ENCODE measurements at regions of chr20 and their contacts with region 1.

Region 1: GRCh38 chr20:63980806-63981728 is at the start of gene PRPF6:
- DNase-seq: peak; percentile 93
- H3K4me3 Mint-ChIP-seq: peak within 1 kb of the TSS; percentile 96
- H3K27ac Mint-ChIP-seq: peak within 1 kb of the TSS; percentile 99
- H3K4me1 Mint-ChIP-seq: peaks cover 55% of the 10 kb centered on the region
- H3K27me3 Mint-ChIP-seq: no peaks in the 10 kb centered on the region
- total RNA-seq, gene PRPF6: 68.9 and 70.3 TPM in 2 replicates

Region 2: GRCh38 chr20:63537525-63538203 is 443.4 kb before region 1 on chr20:
- intact Hi-C with region 1: loop called (anchors 2 kb)
- DNase-seq: peak; percentile 94
- H3K4me3 Mint-ChIP-seq: peak overlapping the region; percentile 69
- H3K27ac Mint-ChIP-seq: peak overlapping the region; percentile 87
- H3K4me1 Mint-ChIP-seq: peaks cover 5% of the 10 kb centered on the region
- H3K27me3 Mint-ChIP-seq: no peaks in the 10 kb centered on the region

Region 3: DNA sequence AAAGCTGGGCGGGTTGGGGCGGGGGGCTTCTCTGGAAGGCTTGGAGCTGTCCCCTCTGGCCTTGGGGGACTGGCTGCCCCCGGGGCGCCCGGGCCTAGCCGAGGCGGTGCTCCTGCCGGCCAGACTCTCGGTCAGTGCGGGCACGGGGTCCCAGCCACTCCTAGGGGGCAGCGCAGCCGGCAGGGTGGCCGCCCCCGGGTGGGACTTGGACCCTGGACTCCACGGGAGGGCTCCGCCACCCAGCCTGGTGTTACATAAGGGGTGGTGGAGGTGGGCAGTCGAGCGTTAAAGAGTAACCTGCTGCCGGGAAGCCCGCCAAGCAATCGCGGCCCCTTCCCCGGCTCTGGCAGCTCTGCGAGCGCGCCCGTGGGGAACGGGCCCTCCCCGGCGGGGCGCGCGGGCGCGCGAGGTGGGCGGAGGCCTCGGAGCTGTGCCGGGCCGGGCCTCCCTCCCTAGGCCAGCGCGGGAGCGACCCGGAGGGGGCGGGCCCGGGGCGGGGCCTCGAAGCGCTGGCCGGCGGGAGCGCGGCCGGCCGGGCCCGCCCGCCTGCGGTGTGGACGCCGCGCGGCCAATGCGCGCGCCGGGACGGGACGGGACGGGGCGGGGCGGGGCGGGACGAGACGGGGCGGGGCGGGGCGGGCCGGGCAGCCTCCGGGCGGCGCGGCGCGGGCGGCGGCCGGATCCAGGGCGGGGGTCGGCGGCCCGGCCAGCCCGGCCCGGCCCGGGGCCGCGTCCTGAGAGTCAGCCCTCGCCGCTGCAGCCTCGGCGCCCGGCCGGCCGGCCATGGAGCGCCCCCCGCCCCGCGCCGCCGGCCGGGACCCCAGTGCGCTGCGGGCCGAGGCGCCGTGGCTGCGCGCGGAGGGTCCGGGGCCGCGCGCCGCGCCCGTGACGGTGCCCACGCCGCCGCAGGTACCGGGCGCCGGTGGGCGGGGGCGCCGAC is 241.7 kb before region 1 on chr20 and contains the start of gene SLC2A4RG:
- intact Hi-C with region 1: no loop called
- DNase-seq: peak; percentile 72
- H3K4me3 Mint-ChIP-seq: peak within 1 kb of the TSS; percentile 13
- H3K27ac Mint-ChIP-seq: no peak within 1 kb of the TSS
- H3K4me1 Mint-ChIP-seq: peaks cover 12% of the 10 kb centered on the region
- H3K27me3 Mint-ChIP-seq: no peaks in the 10 kb centered on the region
- total RNA-seq, gene SLC2A4RG: 48.3 and 53.0 TPM in 2 replicates

Region 4: GRCh38 chr20:63894358-63895201 is 86.5 kb before region 1 on chr20 and contains the start of gene DNAJC5:
- intact Hi-C with region 1: loop called (anchors 1 kb)
- DNase-seq: peak; percentile 95
- H3K4me3 Mint-ChIP-seq: peak within 1 kb of the TSS; percentile 97
- H3K27ac Mint-ChIP-seq: peak within 1 kb of the TSS; percentile 94
- H3K4me1 Mint-ChIP-seq: peaks cover 36% of the 10 kb centered on the region
- H3K27me3 Mint-ChIP-seq: no peaks in the 10 kb centered on the region
- total RNA-seq, gene DNAJC5: 38.1 and 40.0 TPM in 2 replicates

Region 5: DNA sequence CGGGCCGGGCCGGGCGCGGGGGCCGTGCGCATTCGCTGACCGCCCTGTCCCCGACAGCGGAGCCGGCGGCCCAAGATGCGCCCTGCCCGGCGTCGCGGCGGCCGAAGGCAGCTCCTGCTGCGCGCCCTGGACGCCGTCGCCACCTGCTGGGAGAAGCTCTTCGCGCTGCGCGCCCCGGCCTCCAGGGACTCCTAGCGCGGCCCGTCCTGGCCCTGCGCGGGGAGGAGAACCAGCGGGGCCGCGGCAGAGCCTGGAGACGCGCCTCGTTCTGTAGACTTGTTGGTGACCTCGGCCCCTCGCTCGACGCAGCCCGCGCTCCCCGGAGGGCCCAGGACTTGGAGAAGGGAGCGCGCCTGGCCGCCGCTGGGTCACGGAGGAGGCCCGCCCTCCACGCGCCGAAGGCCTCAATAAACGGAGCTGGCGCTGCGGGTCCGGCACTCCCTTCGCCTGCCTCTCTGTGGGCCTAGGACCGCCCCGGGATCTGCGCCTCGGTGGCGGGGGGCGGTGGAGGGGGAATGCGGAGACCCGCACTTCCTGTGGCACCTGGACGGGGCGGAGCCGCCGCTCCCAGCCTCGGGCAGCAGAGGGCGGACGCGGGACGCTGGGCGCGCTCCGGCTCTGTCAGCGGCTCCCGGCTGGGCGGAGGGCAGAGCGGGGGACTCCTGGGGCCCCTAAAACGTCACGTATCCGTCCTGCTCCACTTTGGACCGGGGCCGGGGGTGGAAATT is 57.7 kb after region 1 on chr20:
- intact Hi-C with region 1: loop called (anchors 1 kb)
- DNase-seq: peak; percentile 73
- H3K4me3 Mint-ChIP-seq: peak overlapping the region; percentile 66
- H3K27ac Mint-ChIP-seq: no peak overlapping the region
- H3K4me1 Mint-ChIP-seq: peaks cover 38% of the 10 kb centered on the region
- H3K27me3 Mint-ChIP-seq: no peaks in the 10 kb centered on the region

Region 6: DNA sequence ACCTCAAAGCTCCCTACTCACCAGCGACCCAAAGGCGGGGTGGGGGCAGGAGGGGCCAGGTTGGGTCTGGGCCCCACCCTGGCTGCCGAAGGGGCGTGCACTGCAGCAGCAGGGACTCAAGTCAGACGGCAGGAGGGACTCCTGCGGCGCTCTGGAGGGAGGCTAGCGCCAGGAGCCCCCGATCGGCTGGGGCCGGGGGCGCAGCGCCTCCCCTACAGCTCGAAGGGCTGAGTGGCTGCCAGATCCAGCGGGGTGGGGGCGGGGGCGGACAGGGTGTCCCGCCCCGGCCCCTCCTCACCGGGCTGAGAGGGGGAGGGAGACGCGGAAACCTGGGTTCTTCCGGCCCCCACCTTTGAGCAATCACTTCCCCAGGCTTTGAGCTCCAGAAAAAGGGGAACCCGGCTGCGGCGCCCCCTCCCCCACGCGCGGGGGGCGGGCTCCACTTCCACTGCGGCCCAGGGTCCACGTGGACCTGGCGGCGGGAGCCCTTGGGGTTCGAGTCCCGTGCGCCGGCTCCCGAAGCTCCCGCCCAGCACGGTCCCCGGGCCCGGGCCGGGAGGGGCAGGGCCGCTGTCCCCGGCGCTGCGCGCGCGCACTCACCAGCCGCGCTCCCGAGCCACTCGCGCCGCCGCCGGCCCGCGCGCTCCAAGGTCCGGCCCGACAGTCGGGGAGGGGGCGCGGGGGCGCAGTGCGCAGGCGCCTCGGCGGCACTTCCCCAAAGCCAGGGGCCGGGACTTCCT is 98.4 kb after region 1 on chr20 and contains the start of gene RGS19:
- intact Hi-C with region 1: loop called (anchors 5 kb)
- DNase-seq: peak; percentile 71
- H3K4me3 Mint-ChIP-seq: peak within 1 kb of the TSS; percentile 95
- H3K27ac Mint-ChIP-seq: peak within 1 kb of the TSS; percentile 80
- H3K4me1 Mint-ChIP-seq: peaks cover 24% of the 10 kb centered on the region
- H3K27me3 Mint-ChIP-seq: peaks cover 21% of the 10 kb centered on the region
- total RNA-seq, gene RGS19: 42.0 and 43.3 TPM in 2 replicates